CD8-positive, alpha-beta memory T cell (primary cell): ENCODE measurements at regions of chr14 and their contacts with region 1.

Region 1: GRCh38 chr14:68506021-68506644 is 286.7 kb downstream of the ZFP36L1 start:
- DNase-seq: no peak
- H3K4me3 ChIP-seq: peak overlapping the region; percentile 35
- H3K4me3 Mint-ChIP-seq: peak overlapping the region in 6 of 7 donors; percentile 52 to 73 (median 69)
- H3K27ac ChIP-seq: no peak overlapping the region
- H3K27ac Mint-ChIP-seq: peak overlapping the region; percentile 74 to 96 (median 91)
- H3K4me1 ChIP-seq: peaks cover 69% of the 10 kb centered on the region
- H3K4me1 Mint-ChIP-seq: peaks cover 36 to 55% (median 44%) of the 10 kb centered on the region in 3 donors
- H3K27me3 ChIP-seq: no peaks in the 10 kb centered on the region
- H3K27me3 Mint-ChIP-seq: peaks cover 0 to 2% of the 10 kb centered on the region in 2 donors

Region 2: GRCh38 chr14:68495101-68496039 is 10.8 kb before region 1 on chr14:
- CTCF ChIA-PET with region 1: no interaction called
- POLR2A ChIA-PET with region 1: no interaction called
- DNase-seq: peak in 1 of 5 donors; percentile 66
- H3K4me3 ChIP-seq: no peak overlapping the region
- H3K4me3 Mint-ChIP-seq: no peak overlapping the region
- H3K27ac ChIP-seq: no peak overlapping the region
- H3K27ac Mint-ChIP-seq: peak overlapping the region in 3 of 8 donors; percentile 7 to 35 (median 17)
- H3K4me1 ChIP-seq: peaks cover 25% of the 10 kb centered on the region
- H3K4me1 Mint-ChIP-seq: peaks cover 0 to 12% (median 0%) of the 10 kb centered on the region in 3 donors
- H3K27me3 ChIP-seq: no peaks in the 10 kb centered on the region
- H3K27me3 Mint-ChIP-seq: no peaks in the 10 kb centered on the region

Region 3: DNA sequence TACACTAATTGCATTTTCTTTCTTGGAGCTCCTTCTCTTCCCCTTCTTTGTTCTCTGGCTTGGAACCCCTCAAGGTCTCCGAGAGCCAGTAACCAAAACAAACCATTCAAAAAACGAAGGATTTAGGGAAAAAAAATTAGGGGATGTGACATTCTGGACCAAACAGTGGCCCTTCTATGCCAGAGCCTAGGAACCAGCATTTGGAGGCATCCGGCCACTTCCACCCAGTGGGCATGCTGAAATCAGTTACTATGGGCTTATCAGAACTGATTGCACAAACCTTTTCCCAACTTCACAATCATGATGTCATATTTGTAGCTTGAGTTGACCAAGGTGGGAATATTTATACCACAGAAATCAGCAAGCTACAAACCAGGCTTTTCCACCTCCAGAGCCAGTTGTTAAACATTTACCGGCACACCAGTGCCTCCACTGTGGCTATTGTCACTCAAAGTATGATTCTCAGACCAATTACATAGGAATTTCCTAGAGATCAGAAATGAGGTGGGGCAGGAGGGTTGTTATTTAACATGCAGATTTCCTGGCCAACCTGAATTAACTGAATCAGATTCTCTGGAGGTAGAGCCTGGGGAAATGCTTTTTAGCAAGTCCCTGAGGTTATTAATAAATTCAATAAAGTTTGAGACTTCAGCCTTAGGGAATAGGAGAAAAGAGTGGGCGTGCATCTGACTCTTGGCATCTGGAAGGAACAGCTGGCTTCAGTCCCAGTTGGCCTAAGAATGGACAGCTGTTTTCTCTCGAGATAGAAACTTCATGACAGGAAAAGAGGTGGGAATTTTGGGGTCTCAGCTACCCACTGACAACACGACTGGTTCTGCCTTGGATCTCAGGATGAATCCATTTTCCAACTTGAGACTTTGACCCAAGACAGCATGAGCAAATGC is 12.9 kb after region 1 on chr14:
- CTCF ChIA-PET with region 1: interaction called, 12 read pairs
- POLR2A ChIA-PET with region 1: no interaction called
- DNase-seq: no peak
- H3K4me3 ChIP-seq: no peak overlapping the region
- H3K4me3 Mint-ChIP-seq: no peak overlapping the region
- H3K27ac ChIP-seq: no peak overlapping the region
- H3K27ac Mint-ChIP-seq: peak overlapping the region in 3 of 8 donors; percentile 56 to 85 (median 74)
- H3K4me1 ChIP-seq: peaks cover 6% of the 10 kb centered on the region
- H3K4me1 Mint-ChIP-seq: peaks cover 9 to 10% (median 9%) of the 10 kb centered on the region in 3 donors
- H3K27me3 ChIP-seq: no peaks in the 10 kb centered on the region
- H3K27me3 Mint-ChIP-seq: peaks cover 0 to 4% of the 10 kb centered on the region in 2 donors